PC-9 (cell line): ENCODE measurements at regions of chr1 and their contacts with region 1.

Region 1: GRCh38 chr1:113042285-113043143 is 30.5 kb upstream of the LRIG2 start:
- DNase-seq: peak; percentile 71 to 74
- H3K4me3 ChIP-seq: no peak overlapping the region
- H3K27ac ChIP-seq: no peak overlapping the region
- H3K4me1 ChIP-seq: peaks cover 18% of the 10 kb centered on the region
- H3K27me3 ChIP-seq: no peaks in the 10 kb centered on the region
- CTCF ChIP-seq: peak; percentile 82

Region 2: DNA sequence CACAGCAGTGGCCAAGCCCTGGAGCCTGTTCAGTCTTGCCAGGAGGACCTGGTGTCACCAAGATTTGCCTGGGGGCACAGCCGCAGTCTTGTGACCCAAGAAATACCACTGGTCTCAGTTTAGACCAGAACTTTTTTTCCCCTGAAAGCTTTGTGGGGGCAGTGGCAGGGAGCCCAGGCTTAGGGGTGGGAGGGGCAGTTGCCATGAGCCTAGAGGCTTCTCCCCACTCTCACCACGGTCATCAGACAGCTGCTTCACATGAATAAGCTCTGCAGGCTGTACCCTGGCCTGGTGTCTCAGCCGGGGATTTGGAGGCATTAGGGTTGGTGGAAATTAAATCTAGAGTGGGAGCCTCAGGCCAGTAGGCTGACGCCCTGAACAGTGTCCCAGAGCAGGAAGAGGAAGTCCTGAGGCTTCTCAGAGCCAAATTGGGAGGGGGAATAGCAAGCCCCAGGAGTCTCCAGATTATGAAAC is 160.2 kb before region 1 on chr1:
- CTCF ChIA-PET with region 1: interaction called, 5 read pairs
- POLR2A ChIA-PET with region 1: no interaction called
- intact Hi-C with region 1: loop called (anchors 1 kb)
- DNase-seq: no peak
- H3K4me3 ChIP-seq: no peak overlapping the region
- H3K27ac ChIP-seq: no peak overlapping the region
- H3K4me1 ChIP-seq: peaks cover 1% of the 10 kb centered on the region
- H3K27me3 ChIP-seq: no peaks in the 10 kb centered on the region
- CTCF ChIP-seq: no peak

Region 3: GRCh38 chr1:112955781-112956543 is 86.6 kb before region 1 on chr1 and contains the start of gene SLC16A1:
- CTCF ChIA-PET with region 1: interaction called, 4 read pairs
- POLR2A ChIA-PET with region 1: interaction called, 16 read pairs
- intact Hi-C with region 1: loop called (anchors 2 kb)
- DNase-seq: peak; percentile 81 to 92
- H3K4me3 ChIP-seq: peak within 1 kb of the TSS; percentile 82
- H3K27ac ChIP-seq: peak within 1 kb of the TSS; percentile 73
- H3K4me1 ChIP-seq: peaks cover 36% of the 10 kb centered on the region
- H3K27me3 ChIP-seq: no peaks in the 10 kb centered on the region
- CTCF ChIP-seq: peak; percentile 31
- total RNA-seq, gene SLC16A1: 52.9 and 74.6 TPM in 2 replicates

Region 4: GRCh38 chr1:112998592-112999235 is 43.8 kb before region 1 on chr1:
- CTCF ChIA-PET with region 1: interaction called, 9 read pairs
- POLR2A ChIA-PET with region 1: interaction called, 11 read pairs
- intact Hi-C with region 1: no loop called
- DNase-seq: peak in 1 of 2 experiments; percentile 4
- H3K4me3 ChIP-seq: no peak overlapping the region
- H3K27ac ChIP-seq: no peak overlapping the region
- H3K4me1 ChIP-seq: no peaks in the 10 kb centered on the region
- H3K27me3 ChIP-seq: no peaks in the 10 kb centered on the region
- CTCF ChIP-seq: no peak